Caco-2 (cell line): ENCODE measurements at regions of chr5 and their contacts with region 1.

Region 1: DNA sequence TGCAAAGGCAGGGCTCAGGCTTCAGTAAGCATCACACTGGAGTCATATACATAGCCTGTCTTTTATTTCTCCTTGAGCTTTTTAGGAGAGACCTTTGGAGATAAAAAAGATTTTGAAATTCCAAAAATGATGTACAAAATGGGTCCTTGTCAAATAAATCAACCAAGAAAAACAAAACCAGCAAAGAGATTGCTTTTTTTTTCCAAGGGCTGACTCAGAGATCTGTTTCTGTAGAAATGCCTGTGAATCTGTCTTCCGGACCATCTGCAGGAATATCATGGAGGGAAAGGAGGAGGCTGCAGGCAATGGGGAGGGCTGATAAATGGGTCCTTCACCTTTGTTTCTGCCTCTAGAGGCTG is 77.4 kb downstream of the SLIT3 start:
- DNase-seq: peak; percentile 78 to 87
- H3K4me3 ChIP-seq: no peak overlapping the region
- H3K4me3 Mint-ChIP-seq: peak overlapping the region; percentile 39
- H3K27ac Mint-ChIP-seq: peak overlapping the region; percentile 83
- H3K4me1 ChIP-seq: peaks cover 65% of the 10 kb centered on the region
- H3K4me1 Mint-ChIP-seq: peaks cover 56% of the 10 kb centered on the region
- H3K27me3 ChIP-seq: no peaks in the 10 kb centered on the region
- H3K27me3 Mint-ChIP-seq: no peaks in the 10 kb centered on the region
- CTCF ChIP-seq: no peak

Region 2: GRCh38 chr5:169149317-169149716 is 74.3 kb before region 1 on chr5:
- CTCF ChIA-PET with region 1: no interaction called
- POLR2A ChIA-PET with region 1: no interaction called
- intact Hi-C with region 1: loop called (anchors 2 kb)
- DNase-seq: peak in 1 of 2 experiments; percentile 42
- H3K4me3 ChIP-seq: no peak overlapping the region
- H3K4me3 Mint-ChIP-seq: no peak overlapping the region
- H3K27ac Mint-ChIP-seq: peak overlapping the region; percentile 51
- H3K4me1 ChIP-seq: peaks cover 21% of the 10 kb centered on the region; the same call in 1 of the 2 replicates
- H3K4me1 Mint-ChIP-seq: peaks cover 28% of the 10 kb centered on the region
- H3K27me3 ChIP-seq: no peaks in the 10 kb centered on the region
- H3K27me3 Mint-ChIP-seq: no peaks in the 10 kb centered on the region
- CTCF ChIP-seq: peak; percentile 52 to 76

Region 3: GRCh38 chr5:169161022-169161680 is 62.4 kb before region 1 on chr5:
- CTCF ChIA-PET with region 1: no interaction called
- POLR2A ChIA-PET with region 1: no interaction called
- intact Hi-C with region 1: loop called (anchors 1 kb)
- DNase-seq: peak; percentile 79 to 83
- H3K4me3 ChIP-seq: no peak overlapping the region
- H3K4me3 Mint-ChIP-seq: no peak overlapping the region
- H3K27ac Mint-ChIP-seq: peak overlapping the region; percentile 34
- H3K4me1 ChIP-seq: peaks cover 38% of the 10 kb centered on the region
- H3K4me1 Mint-ChIP-seq: peaks cover 42% of the 10 kb centered on the region
- H3K27me3 ChIP-seq: no peaks in the 10 kb centered on the region
- H3K27me3 Mint-ChIP-seq: no peaks in the 10 kb centered on the region
- CTCF ChIP-seq: no peak

Region 4: DNA sequence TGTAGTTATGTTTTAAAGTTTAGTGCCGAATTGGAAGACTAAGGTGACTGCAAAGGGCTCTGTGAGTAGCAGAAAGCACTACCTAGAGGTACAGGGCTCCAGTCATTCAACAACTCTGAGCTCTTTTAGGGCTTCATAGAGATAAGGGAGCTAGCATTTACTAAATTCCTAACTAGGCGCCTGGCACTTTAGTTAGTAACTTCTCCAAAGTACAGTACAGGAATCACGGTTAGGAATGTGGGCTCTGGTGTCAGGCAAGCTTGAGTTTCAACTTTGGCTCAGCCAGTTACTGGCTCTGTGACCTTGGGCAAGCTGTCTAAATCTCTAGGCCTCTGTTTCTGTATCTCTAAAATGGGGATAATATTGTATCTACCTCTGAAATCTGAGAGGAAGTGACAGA is 37.9 kb before region 1 on chr5:
- CTCF ChIA-PET with region 1: interaction called, 4 read pairs
- POLR2A ChIA-PET with region 1: interaction called, 3 read pairs
- intact Hi-C with region 1: loop called (anchors 1 kb)
- DNase-seq: peak in 1 of 2 experiments; percentile 19
- H3K4me3 ChIP-seq: no peak overlapping the region
- H3K4me3 Mint-ChIP-seq: no peak overlapping the region
- H3K27ac Mint-ChIP-seq: peak overlapping the region; percentile 85
- H3K4me1 ChIP-seq: peaks cover 17% of the 10 kb centered on the region
- H3K4me1 Mint-ChIP-seq: peaks cover 13% of the 10 kb centered on the region
- H3K27me3 ChIP-seq: no peaks in the 10 kb centered on the region
- H3K27me3 Mint-ChIP-seq: no peaks in the 10 kb centered on the region
- CTCF ChIP-seq: no peak

Region 5: GRCh38 chr5:169248996-169249395 is 25.4 kb after region 1 on chr5:
- CTCF ChIA-PET with region 1: interaction called, 3 read pairs
- POLR2A ChIA-PET with region 1: interaction called, 3 read pairs
- intact Hi-C with region 1: loop called (anchors 1 kb)
- DNase-seq: peak; percentile 48 to 49
- H3K4me3 ChIP-seq: no peak overlapping the region
- H3K4me3 Mint-ChIP-seq: no peak overlapping the region
- H3K27ac Mint-ChIP-seq: peak overlapping the region; percentile 91
- H3K4me1 ChIP-seq: peaks cover 30% of the 10 kb centered on the region
- H3K4me1 Mint-ChIP-seq: peaks cover 64% of the 10 kb centered on the region
- H3K27me3 ChIP-seq: no peaks in the 10 kb centered on the region
- H3K27me3 Mint-ChIP-seq: no peaks in the 10 kb centered on the region
- CTCF ChIP-seq: no peak

Region 6: GRCh38 chr5:169272731-169273401 is 49.3 kb after region 1 on chr5:
- CTCF ChIA-PET with region 1: interaction called, 8 read pairs
- POLR2A ChIA-PET with region 1: interaction called, 7 read pairs
- intact Hi-C with region 1: loop called (anchors 1 kb)
- DNase-seq: no peak
- H3K4me3 ChIP-seq: no peak overlapping the region
- H3K4me3 Mint-ChIP-seq: peak overlapping the region; percentile 61
- H3K27ac Mint-ChIP-seq: peak overlapping the region; percentile 90
- H3K4me1 ChIP-seq: peaks cover 53% of the 10 kb centered on the region
- H3K4me1 Mint-ChIP-seq: peaks cover 62% of the 10 kb centered on the region
- H3K27me3 ChIP-seq: no peaks in the 10 kb centered on the region
- H3K27me3 Mint-ChIP-seq: no peaks in the 10 kb centered on the region
- CTCF ChIP-seq: no peak

Region 7: GRCh38 chr5:169296419-169297143 is 73.0 kb after region 1 on chr5:
- CTCF ChIA-PET with region 1: no interaction called
- POLR2A ChIA-PET with region 1: no interaction called
- intact Hi-C with region 1: loop called (anchors 2 kb)
- DNase-seq: peak in 1 of 2 experiments; percentile 29
- H3K4me3 ChIP-seq: no peak overlapping the region
- H3K4me3 Mint-ChIP-seq: peak overlapping the region; percentile 2
- H3K27ac Mint-ChIP-seq: peak overlapping the region; percentile 61
- H3K4me1 ChIP-seq: peaks cover 43% of the 10 kb centered on the region
- H3K4me1 Mint-ChIP-seq: peaks cover 42% of the 10 kb centered on the region
- H3K27me3 ChIP-seq: no peaks in the 10 kb centered on the region
- H3K27me3 Mint-ChIP-seq: no peaks in the 10 kb centered on the region
- CTCF ChIP-seq: no peak

Region 8: DNA sequence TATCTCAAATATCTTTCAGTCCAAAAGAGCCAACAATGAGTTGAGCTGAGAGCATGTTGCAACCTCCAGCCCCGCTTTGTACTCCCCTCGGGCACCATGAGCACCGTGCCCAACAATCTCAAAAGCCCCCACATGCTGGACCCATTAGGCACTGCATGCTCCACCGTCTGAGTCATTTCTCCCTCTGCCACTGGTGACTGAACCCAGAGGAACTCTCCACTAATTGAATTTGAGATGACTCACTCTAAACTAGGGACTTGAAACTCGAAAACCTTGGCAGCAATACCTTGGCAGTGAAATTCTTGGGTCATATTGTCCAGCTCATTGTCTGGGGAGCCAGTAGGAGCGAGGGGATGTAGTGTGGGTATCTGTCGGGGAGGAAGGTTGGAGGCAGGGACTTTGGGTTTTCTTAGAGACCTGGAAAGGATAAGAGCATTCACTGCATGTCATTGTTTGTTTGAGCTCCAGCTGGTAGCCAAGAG is 127.2 kb after region 1 on chr5:
- CTCF ChIA-PET with region 1: no interaction called
- POLR2A ChIA-PET with region 1: no interaction called
- intact Hi-C with region 1: no loop called
- DNase-seq: no peak
- H3K4me3 ChIP-seq: no peak overlapping the region
- H3K4me3 Mint-ChIP-seq: no peak overlapping the region
- H3K27ac Mint-ChIP-seq: peak overlapping the region; percentile 69
- H3K4me1 ChIP-seq: peaks cover 17% of the 10 kb centered on the region
- H3K4me1 Mint-ChIP-seq: peaks cover 30% of the 10 kb centered on the region
- H3K27me3 ChIP-seq: no peaks in the 10 kb centered on the region
- H3K27me3 Mint-ChIP-seq: no peaks in the 10 kb centered on the region
- CTCF ChIP-seq: no peak